MCF 10A (cell line): ENCODE measurements at regions of chr1 and their contacts with region 1.

Region 1: DNA sequence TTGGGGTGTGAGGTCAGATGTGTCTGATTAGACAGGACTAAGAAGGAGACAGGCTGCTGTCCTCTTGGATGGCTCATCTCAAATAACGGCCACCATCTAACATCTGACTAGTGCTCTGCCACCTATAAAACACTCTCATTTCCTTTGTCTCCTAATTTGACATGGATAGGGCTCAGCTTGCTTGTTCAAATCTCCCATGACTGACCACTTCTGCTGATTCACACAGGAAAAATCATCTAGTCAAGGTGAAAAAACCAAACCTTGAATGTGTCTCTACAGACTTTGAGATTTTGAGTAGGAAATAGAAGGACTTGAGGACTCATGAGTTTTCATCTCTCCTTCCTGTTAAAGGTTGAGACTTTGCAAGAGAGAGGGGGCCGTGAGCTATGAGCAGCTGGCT is 150.6 kb downstream of the IER5 start:
- DNase-seq: no peak
- H3K4me3 Mint-ChIP-seq: no peak overlapping the region
- H3K27ac Mint-ChIP-seq: no peak overlapping the region
- H3K4me1 Mint-ChIP-seq: no peaks in the 10 kb centered on the region
- H3K27me3 Mint-ChIP-seq: no peaks in the 10 kb centered on the region
- CTCF ChIP-seq: no peak

Region 2: GRCh38 chr1:180586671-180587155 is 652.4 kb before region 1 on chr1:
- CTCF ChIA-PET with region 1: no interaction called
- POLR2A ChIA-PET with region 1: no interaction called
- intact Hi-C with region 1: no loop called
- DNase-seq: peak; percentile 93
- H3K4me3 Mint-ChIP-seq: no peak overlapping the region
- H3K27ac Mint-ChIP-seq: peak overlapping the region; percentile 99
- H3K4me1 Mint-ChIP-seq: peaks cover 34% of the 10 kb centered on the region
- H3K27me3 Mint-ChIP-seq: no peaks in the 10 kb centered on the region
- CTCF ChIP-seq: no peak

Region 3: DNA sequence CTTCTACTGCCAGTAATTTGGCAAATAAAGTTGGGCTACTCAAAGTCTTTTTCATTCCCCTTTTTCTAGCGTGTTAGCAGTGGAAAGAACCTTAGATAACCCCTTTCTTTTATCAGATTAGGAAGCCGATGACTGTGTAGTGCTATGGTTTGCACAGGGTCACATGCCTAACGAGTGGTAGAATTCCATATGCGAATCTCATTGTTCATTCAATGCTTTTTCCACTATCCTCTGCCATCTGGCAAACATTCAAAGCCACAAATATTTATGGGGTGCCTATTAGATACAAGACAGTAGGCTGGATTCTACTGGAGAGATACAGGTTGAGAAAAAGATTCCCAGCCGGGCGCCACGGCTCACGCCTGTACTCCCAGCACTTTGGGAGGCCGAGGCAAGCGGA is 165.4 kb before region 1 on chr1:
- CTCF ChIA-PET with region 1: no interaction called
- POLR2A ChIA-PET with region 1: no interaction called
- intact Hi-C with region 1: no loop called
- DNase-seq: no peak
- H3K4me3 Mint-ChIP-seq: no peak overlapping the region
- H3K27ac Mint-ChIP-seq: no peak overlapping the region
- H3K4me1 Mint-ChIP-seq: peaks cover 30% of the 10 kb centered on the region
- H3K27me3 Mint-ChIP-seq: no peaks in the 10 kb centered on the region
- CTCF ChIP-seq: no peak

Region 4: GRCh38 chr1:181255270-181255929 is 16.3 kb after region 1 on chr1:
- CTCF ChIA-PET with region 1: interaction called, 8 read pairs
- POLR2A ChIA-PET with region 1: interaction called, 13 read pairs
- intact Hi-C with region 1: no loop called
- DNase-seq: peak; percentile 100
- H3K4me3 Mint-ChIP-seq: no peak overlapping the region
- H3K27ac Mint-ChIP-seq: peak overlapping the region; percentile 80
- H3K4me1 Mint-ChIP-seq: peaks cover 53% of the 10 kb centered on the region
- H3K27me3 Mint-ChIP-seq: peaks cover 15% of the 10 kb centered on the region
- CTCF ChIP-seq: no peak

Region 5: DNA sequence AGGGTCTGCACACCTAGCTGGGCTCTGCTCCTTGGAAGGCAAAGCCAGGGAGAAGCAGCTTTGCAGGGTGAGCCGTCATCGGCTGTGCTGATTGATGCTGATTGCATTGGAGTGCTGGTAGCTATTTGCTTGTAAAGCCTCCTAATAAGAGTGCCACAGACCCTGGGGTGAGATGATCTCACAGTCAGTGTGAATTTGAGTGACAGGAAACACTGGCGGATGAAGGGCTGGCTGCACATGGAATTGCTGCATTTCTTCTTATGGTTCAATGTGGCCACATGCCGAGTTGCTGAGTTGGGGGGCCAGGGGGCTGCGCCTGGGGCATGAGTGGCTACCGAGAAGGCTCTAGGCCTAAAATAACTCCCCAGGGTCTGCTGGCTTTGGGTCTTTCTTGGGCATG is 106.1 kb after region 1 on chr1:
- CTCF ChIA-PET with region 1: no interaction called
- POLR2A ChIA-PET with region 1: no interaction called
- intact Hi-C with region 1: no loop called
- DNase-seq: no peak
- H3K4me3 Mint-ChIP-seq: no peak overlapping the region
- H3K27ac Mint-ChIP-seq: no peak overlapping the region
- H3K4me1 Mint-ChIP-seq: peaks cover 6% of the 10 kb centered on the region
- H3K27me3 Mint-ChIP-seq: no peaks in the 10 kb centered on the region
- CTCF ChIP-seq: no peak